Activated CD4-positive, alpha-beta memory T cell treated with anti-CD3 and anti-CD28 coated beads for 36 hours (primary cell): ENCODE measurements at regions of chr7 and their contacts with region 1.

Region 1: GRCh38 chr7:28096713-28097112 is 83.9 kb downstream of the JAZF1 start:
- DNase-seq: peak; percentile 42
- H3K4me3 Mint-ChIP-seq: no peak overlapping the region
- H3K27ac Mint-ChIP-seq: no peak overlapping the region
- H3K4me1 Mint-ChIP-seq: peaks cover 5% of the 10 kb centered on the region
- H3K27me3 Mint-ChIP-seq: no peaks in the 10 kb centered on the region

Region 2: DNA sequence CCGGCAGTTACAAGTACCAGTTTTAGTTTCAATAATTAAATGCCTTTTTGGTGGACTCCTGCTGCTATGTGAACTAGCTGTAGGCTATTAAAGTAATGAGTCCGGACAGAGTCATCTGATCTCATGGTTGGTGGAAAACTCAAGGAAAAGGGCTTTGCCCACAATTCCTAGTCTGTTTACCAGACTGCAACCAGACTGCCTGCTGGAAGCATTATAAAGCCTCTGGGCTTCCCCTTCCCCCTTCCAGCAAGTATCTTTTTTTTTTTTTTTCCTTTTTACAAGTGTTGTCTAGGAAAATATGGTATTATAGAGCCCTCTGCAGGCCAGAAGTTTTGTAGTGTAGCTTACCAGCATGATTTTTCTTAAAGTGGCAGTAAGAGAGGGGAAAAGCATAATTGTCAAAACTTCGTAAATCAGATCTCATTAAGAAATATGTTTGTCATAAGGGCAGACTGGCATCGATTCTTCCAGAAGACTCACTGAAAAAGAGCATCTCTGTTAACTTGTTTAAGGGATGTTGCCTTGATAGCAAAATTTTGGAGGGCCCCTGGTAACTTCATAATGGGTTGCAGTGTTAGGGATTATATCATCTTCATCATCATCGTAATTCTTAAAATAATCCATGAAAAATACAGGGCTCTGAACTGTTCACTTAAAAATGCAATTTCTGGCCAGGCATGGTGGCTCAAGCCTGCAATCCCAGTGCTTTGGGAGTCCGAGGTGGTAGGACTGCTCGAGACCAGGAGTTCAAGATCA is 175.5 kb before region 1 on chr7:
- CTCF ChIA-PET with region 1: no interaction called
- POLR2A ChIA-PET with region 1: no interaction called
- intact Hi-C with region 1: loop called (anchors 10 kb)
- DNase-seq: no peak
- H3K4me3 Mint-ChIP-seq: no peak overlapping the region
- H3K27ac Mint-ChIP-seq: no peak overlapping the region
- H3K4me1 Mint-ChIP-seq: no peaks in the 10 kb centered on the region
- H3K27me3 Mint-ChIP-seq: no peaks in the 10 kb centered on the region

Region 3: GRCh38 chr7:28052933-28053332 is 43.8 kb before region 1 on chr7:
- CTCF ChIA-PET with region 1: interaction called, 17 read pairs
- POLR2A ChIA-PET with region 1: no interaction called
- intact Hi-C with region 1: no loop called
- DNase-seq: no peak
- H3K4me3 Mint-ChIP-seq: no peak overlapping the region
- H3K27ac Mint-ChIP-seq: no peak overlapping the region
- H3K4me1 Mint-ChIP-seq: peaks cover 8% of the 10 kb centered on the region
- H3K27me3 Mint-ChIP-seq: peaks cover 1% of the 10 kb centered on the region

Region 4: DNA sequence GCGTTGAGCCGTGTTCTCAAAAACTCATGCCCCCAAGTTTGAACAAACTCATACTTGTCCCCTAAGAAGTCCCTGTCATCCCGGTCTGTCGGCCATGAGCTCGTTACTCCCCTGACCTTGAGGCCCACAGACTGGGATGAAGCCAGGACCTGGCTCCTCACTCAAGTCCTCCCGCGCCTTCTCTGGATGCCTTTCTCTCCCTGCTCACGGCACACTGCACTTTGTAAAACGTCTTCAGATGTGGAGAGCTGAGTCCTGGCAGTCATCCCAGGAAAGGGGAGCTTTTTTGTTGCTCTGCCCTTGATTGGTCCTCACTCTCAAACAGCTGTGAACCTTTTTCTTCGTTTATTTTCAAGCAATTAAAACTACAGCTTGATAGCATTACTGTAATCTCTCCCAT is 26.9 kb before region 1 on chr7:
- CTCF ChIA-PET with region 1: interaction called, 29 read pairs
- POLR2A ChIA-PET with region 1: no interaction called
- intact Hi-C with region 1: no loop called
- DNase-seq: no peak
- H3K4me3 Mint-ChIP-seq: no peak overlapping the region
- H3K27ac Mint-ChIP-seq: no peak overlapping the region
- H3K4me1 Mint-ChIP-seq: no peaks in the 10 kb centered on the region
- H3K27me3 Mint-ChIP-seq: no peaks in the 10 kb centered on the region